Activated CD4-positive, alpha-beta memory T cell treated with anti-CD3 and anti-CD28 coated beads for 36 hours (primary cell): ENCODE measurements at regions of chr9 and their contacts with region 1.

Region 1: DNA sequence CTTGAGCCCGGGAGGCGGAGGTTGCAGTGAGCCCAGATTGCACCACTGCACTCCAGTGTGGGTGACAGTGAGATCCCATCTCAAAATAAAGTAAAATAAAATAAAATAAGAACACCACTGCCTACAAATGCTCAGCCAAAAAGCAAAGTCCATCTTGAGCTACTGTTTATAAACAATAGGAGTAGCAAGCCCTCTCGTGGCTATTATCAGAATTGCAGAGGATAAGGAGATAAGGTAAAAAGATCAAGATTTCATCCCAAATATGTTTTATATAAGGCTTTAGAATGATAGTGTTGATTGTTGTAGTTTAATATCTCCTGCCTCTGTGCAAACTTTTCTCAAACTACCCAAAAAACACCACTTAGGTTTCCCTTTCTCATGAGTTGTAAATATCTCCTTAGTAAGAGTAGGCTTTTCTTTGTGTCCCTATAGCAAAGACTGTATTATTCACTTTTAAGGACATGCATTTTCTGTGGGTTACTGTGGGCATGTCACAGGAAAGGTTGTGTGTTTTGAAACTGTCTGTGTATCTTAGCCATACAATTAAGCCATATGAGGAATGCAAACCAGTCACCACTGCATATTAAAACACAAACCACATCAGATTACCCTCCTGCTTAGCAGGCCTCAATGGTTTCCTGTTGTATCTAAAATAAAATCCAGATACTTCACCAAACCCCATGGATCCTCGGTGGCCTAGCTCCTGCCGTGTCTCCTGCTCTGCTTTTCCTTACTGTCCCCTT is 31.8 kb upstream of the CKS2 start:
- DNase-seq: no peak
- H3K4me3 Mint-ChIP-seq: no peak overlapping the region
- H3K27ac Mint-ChIP-seq: no peak overlapping the region
- H3K4me1 Mint-ChIP-seq: peaks cover 29% of the 10 kb centered on the region
- H3K27me3 Mint-ChIP-seq: peaks cover 3% of the 10 kb centered on the region

Region 2: GRCh38 chr9:89010526-89011111 is 268.5 kb before region 1 on chr9:
- CTCF ChIA-PET with region 1: interaction called, 3 read pairs
- POLR2A ChIA-PET with region 1: no interaction called
- intact Hi-C with region 1: loop called (anchors 5 kb)
- DNase-seq: no peak
- H3K4me3 Mint-ChIP-seq: no peak overlapping the region
- H3K27ac Mint-ChIP-seq: no peak overlapping the region
- H3K4me1 Mint-ChIP-seq: no peaks in the 10 kb centered on the region
- H3K27me3 Mint-ChIP-seq: peaks cover 4% of the 10 kb centered on the region

Region 3: DNA sequence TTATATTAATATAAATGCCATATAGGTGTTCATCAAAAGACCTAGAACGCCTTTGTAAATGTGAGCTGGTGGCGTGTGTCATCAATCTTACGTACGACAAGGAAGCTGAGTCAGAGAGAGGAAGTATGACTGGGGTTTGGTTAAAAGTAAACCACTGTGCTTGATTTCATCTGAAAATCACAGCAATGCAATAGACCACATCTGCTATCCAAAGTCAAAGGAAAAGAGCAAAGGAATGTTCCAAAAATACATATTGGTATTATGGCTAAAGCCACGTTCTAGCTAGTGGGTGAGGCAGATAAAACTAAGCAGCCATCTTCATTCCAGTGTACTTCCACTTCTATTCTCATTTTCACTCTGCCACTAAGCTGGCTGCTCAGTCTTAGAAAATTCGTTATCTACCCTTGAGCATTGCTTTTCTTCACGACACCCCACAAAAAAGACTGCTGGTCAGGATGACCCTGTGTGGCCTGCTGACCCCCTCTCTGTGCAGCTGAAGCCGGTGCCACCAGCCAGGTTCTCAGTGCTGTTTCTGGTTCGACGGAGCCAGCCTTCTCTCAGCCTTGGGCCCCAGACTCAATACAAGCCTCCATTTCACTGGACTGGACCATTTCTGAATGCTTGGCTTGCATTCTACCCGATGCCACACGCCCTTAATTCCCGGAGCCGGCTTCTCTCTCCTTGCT is 124.4 kb before region 1 on chr9:
- CTCF ChIA-PET with region 1: interaction called, 15 read pairs
- POLR2A ChIA-PET with region 1: no interaction called
- intact Hi-C with region 1: no loop called
- DNase-seq: peak; percentile 37
- H3K4me3 Mint-ChIP-seq: no peak overlapping the region
- H3K27ac Mint-ChIP-seq: no peak overlapping the region
- H3K4me1 Mint-ChIP-seq: peaks cover 20% of the 10 kb centered on the region
- H3K27me3 Mint-ChIP-seq: peaks cover 30% of the 10 kb centered on the region

Region 4: GRCh38 chr9:89179895-89180667 is 99.1 kb before region 1 on chr9:
- CTCF ChIA-PET with region 1: interaction called, 3 read pairs
- POLR2A ChIA-PET with region 1: no interaction called
- intact Hi-C with region 1: loop called (anchors 2 kb)
- DNase-seq: peak; percentile 77
- H3K4me3 Mint-ChIP-seq: peak overlapping the region; percentile 6
- H3K27ac Mint-ChIP-seq: no peak overlapping the region
- H3K4me1 Mint-ChIP-seq: peaks cover 16% of the 10 kb centered on the region
- H3K27me3 Mint-ChIP-seq: peaks cover 57% of the 10 kb centered on the region